ENCODE measurements at regions of chr2 and their contacts with region 1.

Region 1: GRCh38 chr2:176643646-176644045 is 374.4 kb downstream of the MTX2 start:
- DNase-seq: peak in 1 of 2 donors; percentile 61
- H3K4me3 ChIP-seq: no peak overlapping the region
- H3K27ac ChIP-seq: peak overlapping the region; percentile 28 to 29
- H3K4me1 ChIP-seq: peaks cover 0 to 4% of the 10 kb centered on the region in 2 donors
- H3K27me3 ChIP-seq: no peaks in the 10 kb centered on the region
- CTCF ChIP-seq: no peak
- POLR2A ChIP-seq: no peak

Region 2: GRCh38 chr2:176997074-176997791 is 353.6 kb after region 1 on chr2:
- intact Hi-C with region 1: no loop called
- DNase-seq: peak in 1 of 2 donors; percentile 31
- H3K4me3 ChIP-seq: no peak overlapping the region
- H3K27ac ChIP-seq: peak overlapping the region; percentile 48 to 49
- H3K4me1 ChIP-seq: no peaks in the 10 kb centered on the region
- H3K27me3 ChIP-seq: no peaks in the 10 kb centered on the region
- CTCF ChIP-seq: no peak
- POLR2A ChIP-seq: no peak

Region 3: GRCh38 chr2:177148477-177149154 is 505.0 kb after region 1 on chr2:
- intact Hi-C with region 1: loop called (anchors 5 kb)
- DNase-seq: peak; percentile 76 to 83
- H3K4me3 ChIP-seq: peak overlapping the region; percentile 41 to 42
- H3K27ac ChIP-seq: peak overlapping the region; percentile 65 to 88
- H3K4me1 ChIP-seq: peaks cover 0 to 3% of the 10 kb centered on the region in 2 donors
- H3K27me3 ChIP-seq: no peaks in the 10 kb centered on the region
- CTCF ChIP-seq: peak; percentile 78 to 93 (median 82)
- POLR2A ChIP-seq: peak in 1 of 2 donors; percentile 54